Activated CD4-positive, alpha-beta T cell treated with anti-CD3 and anti-CD28 coated beads, Interleukin-2, amount 10 ng/mL, durations not matched to agents 24 days and 14 days (primary cell): ENCODE measurements at regions of chr1 and their contacts with region 1.

Region 1: GRCh38 chr1:64171797-64172281 is 31.6 kb upstream of the UBE2U start:
- DNase-seq: no peak
- H3K4me3 Mint-ChIP-seq: no peak overlapping the region
- H3K27ac Mint-ChIP-seq: peak overlapping the region; percentile 59
- H3K4me1 Mint-ChIP-seq: peaks cover 14% of the 10 kb centered on the region
- H3K27me3 Mint-ChIP-seq: peaks cover 12% of the 10 kb centered on the region

Region 2: DNA sequence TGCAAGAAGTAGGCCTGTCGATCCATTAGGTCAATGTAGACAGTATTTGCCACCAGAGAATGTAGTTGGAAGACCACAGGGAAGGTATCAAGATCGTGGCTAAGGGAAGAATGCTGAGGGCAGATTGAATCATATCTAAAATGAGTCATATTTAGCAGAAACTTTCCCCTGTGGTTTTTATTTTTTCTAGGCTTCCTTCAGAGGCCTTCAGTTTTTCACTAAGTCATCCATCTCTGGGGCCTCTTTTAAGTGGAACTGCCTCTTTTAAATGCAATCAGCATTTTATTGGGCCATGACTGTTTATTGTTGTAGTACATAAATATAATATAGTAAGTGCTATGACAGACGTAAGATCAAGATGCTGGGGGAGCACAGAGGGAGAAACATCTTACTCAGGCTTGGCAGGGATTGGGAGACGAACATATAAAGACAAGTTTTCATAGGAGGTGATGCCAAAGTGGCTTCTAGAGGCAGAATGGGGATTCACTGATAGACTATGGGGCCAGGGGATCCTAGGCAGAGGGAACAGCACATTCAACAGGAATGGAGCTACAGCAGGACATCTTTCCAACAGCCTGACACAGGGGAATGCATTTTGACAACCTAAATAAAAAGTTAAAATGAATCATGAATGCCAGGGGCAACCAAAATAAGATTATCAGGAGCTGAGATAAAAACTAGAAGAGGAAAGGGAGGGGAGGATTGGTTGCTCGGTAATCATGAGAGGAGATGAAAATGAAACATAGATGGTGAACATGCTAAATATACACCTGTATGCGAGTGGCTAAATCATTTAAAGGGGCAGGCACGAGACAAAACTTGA is 51.7 kb after region 1 on chr1:
- intact Hi-C with region 1: loop called (anchors 1 kb)
- DNase-seq: no peak
- H3K4me3 Mint-ChIP-seq: peak overlapping the region; percentile 4
- H3K27ac Mint-ChIP-seq: no peak overlapping the region
- H3K4me1 Mint-ChIP-seq: peaks cover 8% of the 10 kb centered on the region
- H3K27me3 Mint-ChIP-seq: peaks cover 37% of the 10 kb centered on the region